ENCODE measurements at regions of chr5 and their contacts with region 1.

Region 1: GRCh38 chr5:86671536-86671935 is 53.8 kb downstream of the COX7C start:
- DNase-seq: no peak
- H3K4me3 Mint-ChIP-seq: no peak overlapping the region
- H3K27ac Mint-ChIP-seq: no peak overlapping the region
- H3K4me1 Mint-ChIP-seq: no peaks in the 10 kb centered on the region
- H3K27me3 Mint-ChIP-seq: peaks cover 97% of the 10 kb centered on the region
- CTCF ChIP-seq: no peak

Region 2: GRCh38 chr5:86546577-86546976 is 125.0 kb before region 1 on chr5:
- CTCF ChIA-PET with region 1: no interaction called
- POLR2A ChIA-PET with region 1: no interaction called
- intact Hi-C with region 1: loop called (anchors 5 kb)
- DNase-seq: peak; percentile 21
- H3K4me3 Mint-ChIP-seq: no peak overlapping the region
- H3K27ac Mint-ChIP-seq: no peak overlapping the region
- H3K4me1 Mint-ChIP-seq: no peaks in the 10 kb centered on the region
- H3K27me3 Mint-ChIP-seq: peaks cover 70% of the 10 kb centered on the region
- CTCF ChIP-seq: no peak

Measured in MCF 10A (cell line).